Common myeloid progenitor, CD34-positive (primary cell): ENCODE measurements at regions of chr7 and their contacts with region 1.

Region 1: GRCh38 chr7:134701272-134701671 is 54.6 kb downstream of the BPGM start:
- DNase-seq: peak; percentile 50 to 74 (median 68)
- H3K4me3 ChIP-seq: no peak overlapping the region
- H3K27ac ChIP-seq: no peak overlapping the region
- H3K4me1 ChIP-seq: no peaks in the 10 kb centered on the region
- H3K27me3 ChIP-seq: peaks cover 0 to 7% (median 3%) of the 10 kb centered on the region in 5 experiments

Region 2: GRCh38 chr7:134625550-134625949 is 75.7 kb before region 1 on chr7:
- CTCF ChIA-PET with region 1: interaction called, 151 read pairs
- POLR2A ChIA-PET with region 1: no interaction called
- DNase-seq: no peak
- H3K4me3 ChIP-seq: no peak overlapping the region
- H3K27ac ChIP-seq: no peak overlapping the region
- H3K4me1 ChIP-seq: no peaks in the 10 kb centered on the region
- H3K27me3 ChIP-seq: peaks cover 0 to 8% (median 2%) of the 10 kb centered on the region in 5 experiments

Region 3: GRCh38 chr7:134646425-134647305 is 54.6 kb before region 1 on chr7 and contains the start of gene BPGM:
- CTCF ChIA-PET with region 1: interaction called, 40 read pairs
- POLR2A ChIA-PET with region 1: interaction called, 3 read pairs
- DNase-seq: peak; percentile 100
- H3K4me3 ChIP-seq: peak within 1 kb of the TSS; percentile 55 to 96 (median 89)
- H3K27ac ChIP-seq: peak within 1 kb of the TSS; percentile 87 to 95
- H3K4me1 ChIP-seq: peaks cover 9 to 22% (median 15%) of the 10 kb centered on the region in 4 experiments
- H3K27me3 ChIP-seq: no peaks in the 10 kb centered on the region

Region 4: DNA sequence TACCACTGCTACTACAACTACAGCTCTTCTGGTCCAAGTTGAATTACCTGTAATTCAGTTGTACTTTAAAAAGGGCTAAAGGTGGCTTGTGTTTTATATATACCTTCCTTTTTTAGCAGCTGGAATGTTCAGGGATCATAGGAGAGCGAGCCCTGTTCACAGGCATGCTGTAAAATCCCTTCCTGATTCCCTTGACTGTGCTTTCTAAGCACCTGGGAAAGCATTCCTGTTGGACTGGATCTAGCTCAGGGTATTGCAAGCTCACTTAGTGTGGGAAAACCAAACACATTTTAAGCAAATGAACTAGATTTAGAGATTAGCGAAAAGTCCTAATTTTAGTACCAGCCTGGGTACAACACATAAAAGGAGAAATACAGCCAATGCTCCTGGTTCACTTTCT is 23.2 kb before region 1 on chr7:
- CTCF ChIA-PET with region 1: interaction called, 10 read pairs
- POLR2A ChIA-PET with region 1: no interaction called
- DNase-seq: no peak
- H3K4me3 ChIP-seq: no peak overlapping the region
- H3K27ac ChIP-seq: no peak overlapping the region
- H3K4me1 ChIP-seq: no peaks in the 10 kb centered on the region
- H3K27me3 ChIP-seq: no peaks in the 10 kb centered on the region

Region 5: GRCh38 chr7:134690016-134690415 is 11.3 kb before region 1 on chr7:
- CTCF ChIA-PET with region 1: interaction called, 11 read pairs
- POLR2A ChIA-PET with region 1: no interaction called
- DNase-seq: peak in 2 of 3 donors; percentile 28
- H3K4me3 ChIP-seq: no peak overlapping the region
- H3K27ac ChIP-seq: no peak overlapping the region
- H3K4me1 ChIP-seq: peaks cover 0 to 10% (median 4%) of the 10 kb centered on the region in 4 experiments
- H3K27me3 ChIP-seq: peaks cover 0 to 28% (median 4%) of the 10 kb centered on the region in 5 experiments

Region 6: DNA sequence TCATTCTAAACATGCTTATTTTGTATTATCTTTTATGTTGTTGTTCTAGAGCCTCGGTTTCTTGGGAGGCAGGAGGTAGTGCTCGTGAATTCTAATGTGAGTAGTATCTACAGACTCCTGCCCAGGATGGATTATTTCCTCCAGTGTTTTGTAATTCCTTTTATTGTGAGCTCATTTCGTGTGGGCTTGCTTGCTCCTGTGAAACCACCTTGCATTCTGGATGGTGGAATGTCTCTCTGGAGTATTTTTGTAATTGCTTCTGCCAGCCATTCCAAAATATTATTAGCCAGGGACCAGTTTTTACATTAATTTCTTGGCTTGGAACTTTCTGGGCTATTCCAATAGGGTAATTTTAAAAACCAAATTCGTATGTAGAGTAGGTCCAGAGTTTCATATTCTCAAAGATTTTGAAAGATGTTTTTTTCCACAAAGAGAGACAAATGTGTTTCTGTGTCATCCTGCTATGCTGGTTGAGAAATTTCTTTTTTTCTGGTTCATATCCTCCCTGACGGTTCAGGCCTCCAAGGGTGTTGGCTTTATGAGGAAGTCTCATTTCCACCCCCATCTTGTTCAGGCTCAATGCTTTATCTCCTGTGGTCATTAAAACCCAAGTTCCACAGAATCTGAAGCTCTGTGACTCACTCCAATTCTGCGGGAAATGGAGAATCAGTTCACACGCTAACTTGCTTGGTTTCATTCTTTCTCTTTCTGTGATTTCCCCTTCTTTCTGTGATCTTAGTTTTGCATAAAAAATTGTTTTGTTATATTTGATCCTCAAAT is 36.5 kb after region 1 on chr7:
- CTCF ChIA-PET with region 1: no interaction called
- POLR2A ChIA-PET with region 1: no interaction called
- DNase-seq: peak in 2 of 3 donors; percentile 19 to 39
- H3K4me3 ChIP-seq: no peak overlapping the region
- H3K27ac ChIP-seq: no peak overlapping the region
- H3K4me1 ChIP-seq: no peaks in the 10 kb centered on the region
- H3K27me3 ChIP-seq: no peaks in the 10 kb centered on the region

Region 7: DNA sequence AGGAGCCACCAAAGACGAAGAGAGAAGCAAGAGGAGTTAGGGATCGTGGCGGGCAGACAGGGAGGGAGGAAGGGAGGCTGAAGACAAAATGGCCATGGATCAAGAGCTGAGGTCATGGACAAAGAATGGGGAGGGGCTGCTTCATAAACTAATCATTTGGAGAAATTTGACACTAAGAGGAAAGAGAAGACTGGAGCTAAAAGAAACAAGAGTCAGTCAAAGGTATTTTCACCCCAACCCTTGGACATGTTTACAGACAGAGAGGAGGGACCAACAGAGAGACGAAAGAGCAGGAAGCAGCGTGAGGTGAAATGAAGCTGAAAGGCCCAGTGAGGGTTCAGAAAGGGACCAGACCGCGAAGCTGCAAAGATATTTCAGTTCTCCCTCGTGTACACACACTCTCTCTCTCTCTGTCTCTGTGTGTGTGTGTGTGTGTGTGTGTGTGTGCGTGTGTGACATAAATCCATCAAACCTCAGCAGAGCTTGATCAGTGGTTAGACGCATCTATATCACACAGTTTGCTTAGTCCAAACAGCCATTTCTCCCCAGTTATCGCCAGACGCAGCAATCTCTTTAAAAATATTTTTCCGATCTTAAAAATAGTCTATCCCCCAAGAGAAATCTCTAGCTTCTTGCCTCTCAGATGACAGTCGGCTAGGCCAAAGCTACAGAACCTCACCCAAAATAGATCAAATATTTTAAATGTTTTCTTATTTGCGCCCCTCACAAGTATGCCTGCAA is 65.7 kb after region 1 on chr7:
- CTCF ChIA-PET with region 1: no interaction called
- POLR2A ChIA-PET with region 1: no interaction called
- DNase-seq: peak in 2 of 3 donors; percentile 1 to 13
- H3K4me3 ChIP-seq: no peak overlapping the region
- H3K27ac ChIP-seq: no peak overlapping the region
- H3K4me1 ChIP-seq: peaks cover 0 to 7% (median 0%) of the 10 kb centered on the region in 4 experiments
- H3K27me3 ChIP-seq: peaks cover 0 to 2% (median 0%) of the 10 kb centered on the region in 5 experiments

Region 8: DNA sequence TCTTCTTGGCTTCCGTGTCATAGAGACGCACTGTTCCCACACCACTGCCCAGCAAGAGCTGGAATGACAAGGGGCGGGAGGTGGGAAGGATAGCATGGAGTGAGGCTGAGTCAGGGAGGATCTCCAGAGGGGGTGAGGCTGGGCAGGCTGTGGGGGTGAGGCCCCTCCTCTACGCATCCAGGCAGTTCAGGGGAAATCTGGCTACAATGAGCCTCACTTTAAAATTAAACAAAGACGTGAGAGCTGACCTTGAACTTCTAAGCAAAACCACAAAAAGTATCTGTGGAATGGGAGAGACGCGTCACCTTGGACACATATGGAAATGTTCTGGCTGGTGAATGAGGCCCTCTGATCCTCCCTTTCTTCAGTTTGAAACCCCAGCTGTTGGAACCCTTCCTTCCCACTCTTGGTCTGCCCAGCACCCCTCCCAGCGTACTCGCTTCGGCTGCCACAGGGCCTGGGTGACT is 492.4 kb after region 1 on chr7:
- CTCF ChIA-PET with region 1: no interaction called
- POLR2A ChIA-PET with region 1: no interaction called
- DNase-seq: no peak
- H3K4me3 ChIP-seq: no peak overlapping the region
- H3K27ac ChIP-seq: no peak overlapping the region
- H3K4me1 ChIP-seq: no peaks in the 10 kb centered on the region
- H3K27me3 ChIP-seq: no peaks in the 10 kb centered on the region